ENCODE measurements at regions of chr1 and their contacts with region 1.

Region 1: DNA sequence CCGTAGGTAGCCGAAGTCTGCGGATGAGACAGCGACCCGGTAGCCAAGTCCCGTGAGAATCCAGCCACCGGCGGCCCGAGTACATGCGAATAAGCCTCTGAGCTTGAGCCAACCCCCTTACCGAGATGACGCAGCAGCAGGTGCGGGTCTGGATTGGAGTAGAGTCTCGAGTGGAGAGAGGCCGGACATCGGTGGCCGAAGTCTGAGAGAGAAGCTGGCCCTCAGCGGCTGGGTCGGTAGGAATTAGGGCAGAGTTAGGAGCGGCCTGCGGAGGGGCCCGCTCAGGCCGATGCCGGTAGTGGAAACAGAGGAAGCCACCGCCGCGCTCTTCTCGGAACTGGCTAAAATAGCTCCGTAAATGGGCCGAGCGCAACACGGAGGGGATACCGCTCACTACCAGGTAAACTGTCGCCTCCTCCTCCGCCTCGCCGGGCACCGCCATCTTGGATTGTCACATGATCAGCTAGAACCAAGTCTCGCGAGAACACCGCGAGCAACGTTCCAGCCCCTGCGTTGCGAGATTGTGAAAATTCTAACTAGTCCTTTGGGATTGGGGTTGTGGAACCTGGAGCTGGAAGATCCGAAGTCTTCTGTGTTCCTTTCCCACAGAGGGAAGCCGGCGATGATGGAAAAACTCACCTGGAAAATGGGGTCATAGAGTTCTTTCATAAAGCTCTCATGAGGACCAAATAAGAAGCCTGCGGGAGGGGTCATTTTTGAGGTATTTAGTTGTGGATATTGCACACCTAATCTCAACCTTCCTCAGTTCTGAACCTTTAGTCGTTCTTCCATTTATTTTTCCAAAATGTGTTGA is at the start of gene GPATCH3:
- DNase-seq: peak; percentile 81 to 96 (median 87)
- ATAC-seq: peak; percentile 95 to 97
- H3K4me3 Mint-ChIP-seq: peak within 1 kb of the TSS; percentile 89 to 99 (median 98)
- H3K27ac Mint-ChIP-seq: peak within 1 kb of the TSS; percentile 96 to 100 (median 99)
- H3K4me1 Mint-ChIP-seq: peaks cover 14 to 44% (median 30%) of the 10 kb centered on the region in 4 donors
- H3K27me3 Mint-ChIP-seq: no peaks in the 10 kb centered on the region
- polyA plus RNA-seq, gene GPATCH3: 10.9 to 15.2 (median 11.5) TPM

Region 2: GRCh38 chr1:26921540-26922430 is 21.6 kb after region 1 on chr1 and contains the start of gene NUDC:
- POLR2A ChIA-PET with region 1: interaction called, 33 read pairs
- DNase-seq: peak; percentile 92 to 97 (median 95)
- ATAC-seq: peak; percentile 90 to 94
- H3K4me3 Mint-ChIP-seq: peak within 1 kb of the TSS; percentile 88 to 98 (median 96)
- H3K27ac Mint-ChIP-seq: peak within 1 kb of the TSS; percentile 89 to 99 (median 98)
- H3K4me1 Mint-ChIP-seq: peaks cover 11 to 40% (median 37%) of the 10 kb centered on the region in 4 donors
- H3K27me3 Mint-ChIP-seq: no peaks in the 10 kb centered on the region
- polyA plus RNA-seq, gene NUDC: 104 to 131 (median 120) TPM